ENCODE measurements at regions of chr7 and their contacts with region 1.

Region 1: DNA sequence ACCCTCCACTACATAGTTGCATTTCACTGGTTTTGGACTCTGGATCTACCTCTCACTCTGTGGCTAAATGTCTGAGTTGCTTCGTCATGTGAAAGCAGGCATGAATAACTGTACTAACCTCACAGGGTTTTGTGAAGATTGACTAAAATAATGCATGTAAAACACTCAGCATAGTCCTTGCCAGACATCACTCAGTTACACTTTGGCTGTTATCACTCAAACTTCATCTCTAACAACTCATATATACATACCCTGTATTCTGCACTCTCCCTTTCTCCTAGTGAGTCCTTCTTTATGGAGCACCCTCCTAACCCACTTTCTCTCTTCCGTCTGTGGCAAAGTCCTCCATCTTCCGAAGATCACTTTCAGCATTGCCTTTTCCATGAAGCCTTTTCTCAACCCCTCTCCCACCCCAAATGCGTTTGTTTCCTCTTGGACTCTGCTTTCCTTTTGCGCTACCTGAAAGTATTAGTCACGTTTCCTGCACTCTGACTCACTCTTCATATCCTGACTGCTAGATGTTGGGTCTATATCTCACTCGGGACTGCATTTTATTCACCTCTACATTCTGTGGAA is 72.6 kb downstream of the OSBPL3 start:
- DNase-seq: peak; percentile 45
- H3K4me3 Mint-ChIP-seq: no peak overlapping the region
- H3K27ac Mint-ChIP-seq: no peak overlapping the region
- H3K4me1 Mint-ChIP-seq: peaks cover 48% of the 10 kb centered on the region
- H3K27me3 Mint-ChIP-seq: no peaks in the 10 kb centered on the region

Region 2: DNA sequence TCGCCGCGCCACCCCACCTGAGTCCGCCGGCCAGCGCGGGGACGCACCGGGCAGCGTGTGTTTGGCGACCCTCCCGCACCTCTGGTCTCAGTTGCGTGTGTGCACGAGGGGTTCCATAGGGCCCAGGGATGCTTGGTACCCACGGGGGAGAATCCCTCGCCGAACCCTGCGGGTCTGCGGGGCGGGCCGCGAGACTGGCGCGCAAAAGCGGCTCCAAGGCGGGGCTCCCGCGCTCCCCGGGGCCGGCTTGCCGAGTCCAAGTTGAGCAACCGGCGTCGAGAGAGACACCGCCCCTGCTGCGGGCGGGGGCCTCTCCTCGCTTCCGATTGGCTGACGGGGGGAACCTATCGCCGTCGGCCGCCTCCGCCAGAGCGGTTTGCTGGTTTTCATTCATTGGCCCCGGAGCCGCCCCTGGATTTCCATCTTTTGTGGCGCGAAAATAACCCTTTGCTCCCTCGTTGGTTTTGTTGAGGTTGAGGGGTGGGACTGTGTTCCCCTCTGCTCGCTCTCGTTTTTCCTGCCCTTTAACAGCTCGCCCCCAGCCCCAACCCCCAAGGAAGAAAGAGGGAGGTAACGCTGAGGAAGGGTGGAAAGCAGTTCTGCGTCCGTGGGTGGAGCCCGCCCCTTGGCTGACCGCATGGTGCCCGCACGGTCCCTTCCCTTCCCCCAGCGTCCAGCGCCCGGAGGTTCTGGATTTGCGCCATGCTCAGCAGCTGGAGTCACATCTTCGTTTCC is 1433.1 kb before region 1 on chr7:
- intact Hi-C with region 1: loop called (anchors 5 kb)
- DNase-seq: peak; percentile 94
- H3K4me3 Mint-ChIP-seq: peak overlapping the region; percentile 85
- H3K27ac Mint-ChIP-seq: peak overlapping the region; percentile 65
- H3K4me1 Mint-ChIP-seq: peaks cover 35% of the 10 kb centered on the region
- H3K27me3 Mint-ChIP-seq: peaks cover 35% of the 10 kb centered on the region

Region 3: GRCh38 chr7:24757353-24758275 is 149.8 kb before region 1 on chr7 and contains the start of gene GSDME:
- intact Hi-C with region 1: loop called (anchors 5 kb)
- DNase-seq: peak; percentile 24
- H3K4me3 Mint-ChIP-seq: peak within 1 kb of the TSS; percentile 87
- H3K27ac Mint-ChIP-seq: peak within 1 kb of the TSS; percentile 80
- H3K4me1 Mint-ChIP-seq: peaks cover 33% of the 10 kb centered on the region
- H3K27me3 Mint-ChIP-seq: peaks cover 52% of the 10 kb centered on the region
- total RNA-seq, gene GSDME: 8.7 and 9.6 TPM in 2 replicates

Region 4: DNA sequence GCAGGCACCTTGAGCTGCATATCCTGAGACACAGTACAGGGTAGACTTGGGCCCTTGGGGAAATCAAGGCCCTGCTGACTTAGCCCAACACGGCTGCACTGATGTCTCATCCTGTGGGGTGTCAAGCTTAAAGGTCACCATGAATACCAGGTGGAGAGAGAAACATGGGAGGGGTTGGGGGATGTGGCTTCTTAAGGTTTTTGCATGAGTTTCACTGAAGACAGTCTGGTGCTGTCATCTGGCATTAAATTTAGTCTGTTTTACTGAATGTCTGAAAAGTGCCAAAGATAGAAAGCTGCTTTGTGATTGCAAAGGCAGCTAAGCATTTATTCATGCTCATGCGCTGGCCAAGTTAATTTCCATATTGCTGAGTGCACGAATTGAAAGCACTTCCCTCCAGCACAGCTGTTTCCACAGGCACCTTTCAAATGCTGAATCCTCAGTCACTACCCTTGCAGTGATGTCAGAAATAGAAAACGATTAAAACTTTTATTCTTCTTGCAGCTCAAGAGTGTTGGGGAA is 29.5 kb before region 1 on chr7:
- intact Hi-C with region 1: loop called (anchors 1 kb)
- DNase-seq: peak; percentile 16
- H3K4me3 Mint-ChIP-seq: peak overlapping the region; percentile 49
- H3K27ac Mint-ChIP-seq: peak overlapping the region; percentile 69
- H3K4me1 Mint-ChIP-seq: peaks cover 56% of the 10 kb centered on the region
- H3K27me3 Mint-ChIP-seq: no peaks in the 10 kb centered on the region

Region 5: DNA sequence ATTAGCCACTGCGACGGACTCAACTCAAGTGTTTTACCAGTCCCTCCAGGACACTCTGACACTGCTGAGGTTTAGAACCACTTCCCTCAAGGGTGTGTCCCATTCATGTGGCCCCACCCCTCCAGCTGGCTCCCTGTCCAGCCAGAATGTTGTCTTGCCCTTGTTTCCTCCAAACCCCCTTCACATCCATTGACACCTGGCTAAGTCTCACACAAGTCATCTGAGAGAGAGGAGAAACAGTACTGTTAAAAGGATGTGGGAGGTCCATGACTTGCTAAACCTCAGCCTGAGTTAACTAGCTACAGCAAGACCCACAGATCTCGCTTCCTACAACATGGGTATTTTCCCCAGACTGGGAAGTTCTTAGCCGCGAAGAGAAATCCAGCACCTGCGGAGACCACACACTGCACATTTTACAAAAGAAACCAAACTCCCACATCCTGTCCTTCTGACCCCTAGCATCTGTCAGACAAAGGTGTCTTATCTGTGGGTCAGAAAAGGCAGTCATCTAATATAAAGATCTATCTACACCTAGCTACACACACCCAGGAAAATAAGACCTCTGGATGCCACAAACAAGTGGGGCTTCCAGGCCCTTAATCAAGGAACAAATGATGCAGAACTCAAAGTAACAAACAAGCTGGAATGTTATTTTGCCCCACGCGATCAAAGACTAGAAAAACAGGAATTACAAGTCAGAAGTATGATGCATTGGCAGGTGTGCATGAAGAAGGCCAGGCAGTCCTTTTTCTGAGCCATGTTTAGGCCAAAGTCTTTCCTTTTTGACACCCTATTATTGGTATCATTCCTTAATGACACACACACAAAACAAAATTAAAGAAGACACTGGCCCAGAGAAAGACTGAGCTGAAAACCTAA is 58.7 kb after region 1 on chr7:
- intact Hi-C with region 1: loop called (anchors 1 kb)
- DNase-seq: peak; percentile 60
- H3K4me3 Mint-ChIP-seq: peak overlapping the region; percentile 31
- H3K27ac Mint-ChIP-seq: peak overlapping the region; percentile 80
- H3K4me1 Mint-ChIP-seq: peaks cover 79% of the 10 kb centered on the region
- H3K27me3 Mint-ChIP-seq: no peaks in the 10 kb centered on the region

Region 6: GRCh38 chr7:25093268-25093826 is 185.9 kb after region 1 on chr7:
- intact Hi-C with region 1: loop called (anchors 10 kb)
- DNase-seq: peak; percentile 66
- H3K4me3 Mint-ChIP-seq: no peak overlapping the region
- H3K27ac Mint-ChIP-seq: no peak overlapping the region
- H3K4me1 Mint-ChIP-seq: peaks cover 16% of the 10 kb centered on the region
- H3K27me3 Mint-ChIP-seq: peaks cover 9% of the 10 kb centered on the region

Measured in activated T-helper 2 cell treated with anti-CD3 and anti-CD28 coated beads, Interferon-gamma antibody, Interleukin-2, Interleukin-4, amounts not matched to agents 10 μg/mL and 5 μg/mL and 100 μg/mL, durations not matched to agents 14 hours and 24 hours and 36 hours (primary cell).